A673 (cell line): ENCODE measurements at regions of chr1 and their contacts with region 1.

Region 1: GRCh38 chr1:226626577-226626956 is 78.0 kb downstream of the STUM start:
- DNase-seq: peak; percentile 79
- H3K4me3 ChIP-seq: no peak overlapping the region
- H3K27ac ChIP-seq: no peak overlapping the region
- H3K4me1 ChIP-seq: no peaks in the 10 kb centered on the region
- H3K27me3 ChIP-seq: no peaks in the 10 kb centered on the region
- CTCF ChIP-seq: peak; percentile 98

Region 2: GRCh38 chr1:226814751-226815496 is 188.4 kb after region 1 on chr1:
- CTCF ChIA-PET with region 1: interaction called, 13 read pairs
- POLR2A ChIA-PET with region 1: no interaction called
- intact Hi-C with region 1: no loop called
- DNase-seq: no peak
- H3K4me3 ChIP-seq: no peak overlapping the region
- H3K27ac ChIP-seq: no peak overlapping the region
- H3K4me1 ChIP-seq: no peaks in the 10 kb centered on the region
- H3K27me3 ChIP-seq: no peaks in the 10 kb centered on the region
- CTCF ChIP-seq: no peak

Region 3: GRCh38 chr1:227245613-227246320 is 619.2 kb after region 1 on chr1:
- CTCF ChIA-PET with region 1: no interaction called
- POLR2A ChIA-PET with region 1: no interaction called
- intact Hi-C with region 1: loop called (anchors 10 kb)
- DNase-seq: no peak
- H3K4me3 ChIP-seq: no peak overlapping the region
- H3K27ac ChIP-seq: no peak overlapping the region
- H3K4me1 ChIP-seq: no peaks in the 10 kb centered on the region
- H3K27me3 ChIP-seq: no peaks in the 10 kb centered on the region
- CTCF ChIP-seq: no peak